ENCODE measurements at regions of chr3 and their contacts with region 1.

Region 1: DNA sequence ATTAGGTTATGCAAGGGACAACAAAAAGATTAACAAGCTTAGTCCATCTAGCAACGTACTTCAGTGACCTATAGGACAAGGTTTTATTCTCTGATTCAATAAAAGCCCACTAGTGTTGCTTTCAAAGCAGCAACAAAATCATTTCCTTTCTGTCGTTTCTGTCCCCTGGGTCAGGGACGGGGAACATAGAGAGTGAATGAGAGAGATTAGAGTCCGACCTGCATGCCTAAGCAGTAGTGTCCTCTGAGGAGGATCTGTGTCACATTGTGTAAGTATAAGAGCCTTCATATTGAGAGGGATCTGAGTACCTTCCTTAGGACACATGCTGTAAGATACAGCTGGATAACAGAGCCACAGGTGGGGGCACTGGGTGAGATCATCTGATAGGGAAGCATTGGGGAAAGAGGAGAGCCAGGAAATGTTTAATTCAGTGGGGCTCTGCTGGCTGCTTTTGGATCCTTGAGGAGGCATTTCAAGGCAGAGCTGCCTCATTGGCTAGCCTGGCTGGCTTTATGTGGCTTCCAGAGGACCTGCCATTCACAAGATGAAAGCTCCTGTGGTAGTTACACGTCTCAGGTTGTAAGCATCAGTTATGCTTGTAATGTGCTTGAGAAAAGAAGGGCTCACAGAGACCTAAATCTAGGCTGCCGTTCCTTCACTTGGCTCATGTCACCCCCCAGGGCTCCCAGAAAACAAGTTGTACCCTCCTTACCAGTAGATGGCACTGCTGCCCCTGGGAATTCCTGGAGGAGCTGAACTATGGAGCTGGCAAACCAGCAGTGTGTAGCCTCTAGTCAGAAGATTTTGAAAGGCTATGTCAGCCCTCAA is 2.7 kb downstream of the TMEM108 start:
- DNase-seq: peak; percentile 53
- ATAC-seq: peak; percentile 90

Region 2: DNA sequence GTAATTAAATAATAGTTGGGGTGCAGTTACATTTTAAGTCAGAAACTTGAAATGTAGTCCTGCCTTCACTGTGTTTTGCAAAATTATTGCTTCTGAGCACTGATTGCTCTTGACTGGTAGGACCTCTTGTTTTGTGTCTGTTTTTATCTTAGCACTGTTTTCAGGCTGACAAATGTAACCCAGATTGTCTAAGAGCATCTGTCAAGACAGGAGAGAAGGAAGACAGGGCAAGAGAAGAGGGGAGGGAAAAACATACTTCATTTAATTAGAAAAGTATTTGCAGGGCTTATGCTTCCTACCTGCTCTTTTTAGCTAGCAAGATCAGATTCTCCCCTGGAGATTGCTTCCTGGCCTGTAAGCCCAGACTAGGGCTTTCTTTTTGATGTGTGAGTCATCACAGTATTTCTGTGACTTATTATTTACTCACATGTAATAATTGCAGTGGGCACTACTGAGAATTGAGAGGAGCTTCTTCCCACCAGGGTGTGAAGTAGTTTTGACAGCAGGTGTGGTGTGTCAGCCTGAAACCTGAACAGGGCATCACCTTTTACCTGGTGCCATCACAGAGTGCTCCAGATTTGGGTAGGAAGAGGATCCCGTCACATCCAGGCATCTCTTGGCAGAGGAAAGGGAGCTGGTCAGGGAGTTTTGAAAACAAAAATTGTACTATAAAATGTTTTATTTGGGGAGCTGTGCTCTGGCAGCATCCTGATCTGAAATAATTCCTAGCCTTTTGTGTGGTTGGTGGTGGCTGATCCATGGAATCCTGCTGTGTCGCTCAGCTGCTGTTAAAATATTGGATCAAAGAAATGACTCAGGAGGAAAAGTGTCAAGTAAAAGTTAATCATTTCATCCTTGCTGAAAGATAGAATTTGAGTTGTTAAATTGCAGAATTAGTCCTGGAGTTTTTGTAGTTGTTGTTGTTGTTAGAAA is 95.5 kb after region 1 on chr3:
- intact Hi-C with region 1: no loop called
- DNase-seq: no peak
- ATAC-seq: no peak

Region 3: GRCh38 chr3:133377396-133377795 is 336.5 kb after region 1 on chr3:
- intact Hi-C with region 1: loop called (anchors 2 kb)
- DNase-seq: no peak
- ATAC-seq: peak; percentile 61

Region 4: DNA sequence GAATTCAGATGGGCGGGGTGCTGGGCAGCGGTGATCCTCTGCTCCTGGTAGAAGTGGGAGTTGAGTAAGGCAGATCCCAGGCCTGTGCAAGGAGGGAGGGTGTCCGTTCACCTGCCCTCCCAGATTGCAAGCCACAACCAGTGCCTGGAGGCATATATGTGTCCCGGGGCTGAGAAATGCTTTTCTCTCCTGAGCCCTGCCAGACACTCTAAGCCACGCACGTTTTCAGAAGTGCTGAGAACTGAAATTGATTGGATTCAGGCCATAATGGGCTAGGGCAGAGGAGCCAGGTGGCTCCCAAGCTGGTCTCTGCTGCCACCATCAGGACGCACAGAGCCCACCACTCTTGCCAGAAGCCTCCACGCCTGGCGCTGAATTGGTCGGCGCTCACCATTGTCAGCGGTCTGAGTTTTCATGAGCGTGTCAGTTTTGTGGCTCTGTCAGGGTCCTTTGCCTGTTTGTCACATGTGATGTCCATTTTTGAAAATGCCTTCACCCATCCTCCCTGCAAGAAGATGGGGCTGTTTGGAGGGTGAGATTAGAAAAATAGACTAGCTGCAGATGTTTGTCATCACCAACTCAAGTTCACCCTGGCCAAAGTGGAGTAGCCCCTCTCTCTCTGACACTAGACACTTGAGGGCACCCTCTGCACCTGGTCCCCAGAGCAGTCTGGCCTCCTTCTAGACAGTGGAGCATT is 343.6 kb after region 1 on chr3:
- intact Hi-C with region 1: loop called (anchors 2 kb)
- DNase-seq: no peak
- ATAC-seq: peak; percentile 83

Region 5: GRCh38 chr3:133426721-133427120 is 385.8 kb after region 1 on chr3:
- intact Hi-C with region 1: loop called (anchors 2 kb)
- DNase-seq: no peak
- ATAC-seq: no peak

Measured in Right ventricle myocardium inferior (tissue), 1 donor.